ENCODE measurements at regions of chr13 and their contacts with region 1.

Region 1: DNA sequence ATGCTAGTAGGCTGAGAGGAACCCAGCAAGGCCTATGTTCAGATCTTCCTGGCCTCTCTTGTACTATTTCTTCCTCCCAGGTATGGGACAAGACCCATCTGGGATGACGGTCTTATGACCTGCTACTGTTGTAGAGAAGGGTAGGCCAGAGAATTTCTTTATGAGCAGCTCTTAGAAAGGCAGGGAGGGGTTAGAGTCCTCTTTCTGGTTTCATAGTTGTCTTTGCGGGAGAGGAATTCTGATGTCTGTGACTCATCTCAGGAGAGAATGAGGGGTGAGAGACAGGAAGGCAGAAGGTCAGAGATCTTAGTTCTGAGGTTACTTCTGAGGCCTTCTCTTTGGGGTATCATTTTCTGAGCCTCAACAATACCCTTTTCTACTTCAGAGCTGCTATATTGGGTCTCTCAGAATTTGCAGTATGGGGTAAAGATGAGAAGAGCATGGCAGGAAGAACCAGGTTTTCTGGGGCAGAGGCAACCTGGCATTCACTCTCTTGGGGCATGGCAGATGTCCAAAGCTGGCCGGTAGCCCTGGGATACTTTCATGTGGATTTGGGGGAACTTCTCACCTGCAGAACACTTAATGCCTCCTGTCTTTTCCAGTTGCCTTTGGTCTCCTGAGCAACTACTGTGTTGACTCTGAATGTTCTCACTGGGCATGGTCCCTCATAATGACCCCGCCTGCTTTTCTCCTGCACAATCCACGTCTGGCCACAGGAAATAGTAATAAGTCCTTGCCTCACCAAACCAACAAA is 154.4 kb downstream of the GGACT start:
- DNase-seq: peak; percentile 50 to 79
- H3K4me3 ChIP-seq: no peak overlapping the region
- H3K27ac ChIP-seq: peak overlapping the region; percentile 80
- H3K4me1 ChIP-seq: peaks cover 26% of the 10 kb centered on the region
- H3K27me3 ChIP-seq: no peaks in the 10 kb centered on the region
- CTCF ChIP-seq: no peak

Region 2: GRCh38 chr13:100163375-100163774 is 270.8 kb before region 1 on chr13:
- CTCF ChIA-PET with region 1: no interaction called
- POLR2A ChIA-PET with region 1: no interaction called
- intact Hi-C with region 1: no loop called
- DNase-seq: no peak
- H3K4me3 ChIP-seq: no peak overlapping the region
- H3K27ac ChIP-seq: no peak overlapping the region
- H3K4me1 ChIP-seq: no peaks in the 10 kb centered on the region
- H3K27me3 ChIP-seq: no peaks in the 10 kb centered on the region
- CTCF ChIP-seq: no peak

Region 3: GRCh38 chr13:100491164-100491842 is 57.1 kb after region 1 on chr13:
- CTCF ChIA-PET with region 1: interaction called, 3 read pairs
- POLR2A ChIA-PET with region 1: interaction called, 11 read pairs
- intact Hi-C with region 1: loop called (anchors 10 kb)
- DNase-seq: no peak
- H3K4me3 ChIP-seq: no peak overlapping the region
- H3K27ac ChIP-seq: no peak overlapping the region
- H3K4me1 ChIP-seq: peaks cover 27% of the 10 kb centered on the region
- H3K27me3 ChIP-seq: no peaks in the 10 kb centered on the region
- CTCF ChIP-seq: no peak

Measured in PC-9 (cell line).